ENCODE measurements at regions of chr17 and their contacts with region 1.

Region 1: DNA sequence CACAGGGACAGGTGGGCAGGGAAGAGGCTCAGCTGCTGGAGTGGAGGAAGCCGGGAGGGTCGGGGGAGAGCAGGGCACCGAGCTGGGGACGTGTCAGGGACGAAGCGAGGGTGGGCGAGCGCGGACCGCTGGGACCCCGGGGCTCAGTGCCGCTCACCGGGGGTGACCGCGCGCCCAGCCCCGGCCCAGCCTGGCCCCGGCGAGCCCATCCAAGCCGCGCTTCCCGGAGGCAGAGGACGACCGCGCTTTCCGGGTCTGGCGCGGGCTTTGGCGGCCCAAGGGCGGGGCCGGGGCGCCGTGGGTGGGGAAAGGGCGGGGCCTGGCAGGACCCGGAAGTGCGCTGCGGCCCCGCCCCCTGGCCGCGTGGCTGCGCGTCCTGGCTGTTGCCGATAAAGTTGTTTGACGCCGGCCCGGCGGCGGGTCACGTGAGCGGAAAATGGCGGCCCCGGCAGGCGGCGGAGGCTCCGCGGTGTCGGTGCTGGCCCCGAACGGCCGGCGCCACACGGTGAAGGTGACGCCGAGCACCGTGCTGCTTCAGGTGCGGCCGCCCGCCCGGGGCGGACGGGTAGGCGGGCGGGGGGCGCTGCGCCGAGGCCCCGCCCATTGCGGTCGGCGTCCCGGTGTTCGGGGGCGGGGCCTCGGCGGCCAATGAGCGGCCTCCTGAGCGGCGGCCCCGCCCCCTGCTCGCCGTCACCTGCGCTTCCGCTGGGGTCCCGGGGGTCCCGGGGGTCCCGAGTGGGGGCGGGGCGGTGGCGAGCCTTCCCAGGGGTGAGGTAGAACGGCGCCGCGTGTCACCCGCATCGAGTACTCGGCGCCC is at the start of gene ASPSCR1:
- DNase-seq: peak; percentile 93 to 97 (median 93)
- ATAC-seq: peak; percentile 88 to 98 (median 98)
- H3K4me3 ChIP-seq: peak within 1 kb of the TSS; percentile 54 to 96 (median 88)
- H3K27ac ChIP-seq: peak within 1 kb of the TSS; percentile 75 to 95 (median 88)
- H3K4me1 ChIP-seq: peaks cover 0 to 21% (median 14%) of the 10 kb centered on the region in 12 donors
- H3K27me3 ChIP-seq: peaks cover 0 to 3% (median 0%) of the 10 kb centered on the region in 9 donors
- CTCF ChIP-seq: no peak
- POLR2A ChIP-seq: peak in 1 of 2 donors; percentile 89
- total RNA-seq, gene ASPSCR1: 15.1 to 27.8 (median 22.5) TPM

Region 2: DNA sequence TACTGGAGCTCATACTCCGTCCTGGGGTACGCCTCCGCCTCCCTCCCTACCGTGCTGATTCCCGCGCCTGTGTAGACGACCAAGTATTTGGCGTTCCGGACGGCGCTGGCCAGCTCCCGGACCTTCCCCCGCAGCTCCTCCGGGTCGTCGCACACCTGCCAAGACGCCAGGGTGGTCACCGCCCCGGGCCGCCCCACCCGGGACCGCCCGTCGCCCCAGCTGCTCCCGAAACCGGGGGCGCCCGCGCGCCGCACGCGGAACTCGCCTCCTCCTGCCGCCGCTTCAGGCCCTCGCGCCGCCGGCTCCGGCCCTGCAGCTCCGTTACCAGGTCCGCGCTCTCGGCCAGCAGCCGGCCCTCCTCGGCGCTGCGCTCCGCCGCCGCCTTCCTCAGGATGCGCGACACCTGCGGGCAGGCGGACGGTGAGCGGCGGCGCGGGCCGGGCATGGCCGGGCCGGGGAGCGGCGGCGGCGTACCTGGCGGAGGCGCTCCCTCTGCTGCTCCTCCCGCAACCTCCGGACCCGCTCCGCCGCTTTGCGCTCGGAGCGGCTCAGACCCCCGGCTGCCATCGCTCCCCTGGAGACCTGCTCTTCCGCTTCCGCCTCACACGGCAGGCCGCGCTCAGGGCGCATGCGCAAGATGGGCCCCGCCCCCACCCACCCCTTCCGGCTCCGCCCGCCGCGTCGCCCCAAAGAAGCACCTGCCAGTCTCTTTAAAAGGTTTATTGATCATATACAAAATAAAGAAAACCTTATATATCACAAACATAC is 59.7 kb before region 1 on chr17 and contains the start of gene SIRT7:
- intact Hi-C with region 1: no loop called
- DNase-seq: peak; percentile 72 to 92 (median 81)
- ATAC-seq: peak; percentile 55 to 86 (median 82)
- H3K4me3 ChIP-seq: peak within 1 kb of the TSS; percentile 58 to 94 (median 72)
- H3K27ac ChIP-seq: peak within 1 kb of the TSS in 11 of 12 donors; percentile 16 to 80 (median 67)
- H3K4me1 ChIP-seq: peaks cover 0 to 65% (median 24%) of the 10 kb centered on the region in 12 donors
- H3K27me3 ChIP-seq: no peaks in the 10 kb centered on the region
- CTCF ChIP-seq: peak in 1 of 12 donors; percentile 18
- POLR2A ChIP-seq: peak in 1 of 2 donors; percentile 77
- total RNA-seq, gene SIRT7: 3.6 to 13.2 (median 6.6) TPM

Region 3: GRCh38 chr17:82022981-82023374 is 45.6 kb after region 1 on chr17 and contains the start of gene LRRC45:
- intact Hi-C with region 1: loop called in 4 of 10 experiments (anchors 5 kb)
- DNase-seq: peak; percentile 100
- ATAC-seq: peak; percentile 94 to 98 (median 96)
- H3K4me3 ChIP-seq: peak within 1 kb of the TSS; percentile 77 to 99 (median 94)
- H3K27ac ChIP-seq: peak within 1 kb of the TSS in 11 of 12 donors; percentile 32 to 85 (median 73)
- H3K4me1 ChIP-seq: peaks cover 5 to 37% (median 23%) of the 10 kb centered on the region in 12 donors
- H3K27me3 ChIP-seq: no peaks in the 10 kb centered on the region
- CTCF ChIP-seq: no peak
- POLR2A ChIP-seq: no peak
- total RNA-seq, gene LRRC45: 2.9 to 7.5 (median 5.6) TPM

Measured in heart left ventricle (tissue), 16 donors.